Activated CD4-positive, alpha-beta memory T cell treated with anti-CD3 and anti-CD28 coated beads, Interleukin-2, amount 10 ng/mL, durations not matched to agents 7 days and 5 days (primary cell): ENCODE measurements at regions of chr12 and their contacts with region 1.

Region 1: DNA sequence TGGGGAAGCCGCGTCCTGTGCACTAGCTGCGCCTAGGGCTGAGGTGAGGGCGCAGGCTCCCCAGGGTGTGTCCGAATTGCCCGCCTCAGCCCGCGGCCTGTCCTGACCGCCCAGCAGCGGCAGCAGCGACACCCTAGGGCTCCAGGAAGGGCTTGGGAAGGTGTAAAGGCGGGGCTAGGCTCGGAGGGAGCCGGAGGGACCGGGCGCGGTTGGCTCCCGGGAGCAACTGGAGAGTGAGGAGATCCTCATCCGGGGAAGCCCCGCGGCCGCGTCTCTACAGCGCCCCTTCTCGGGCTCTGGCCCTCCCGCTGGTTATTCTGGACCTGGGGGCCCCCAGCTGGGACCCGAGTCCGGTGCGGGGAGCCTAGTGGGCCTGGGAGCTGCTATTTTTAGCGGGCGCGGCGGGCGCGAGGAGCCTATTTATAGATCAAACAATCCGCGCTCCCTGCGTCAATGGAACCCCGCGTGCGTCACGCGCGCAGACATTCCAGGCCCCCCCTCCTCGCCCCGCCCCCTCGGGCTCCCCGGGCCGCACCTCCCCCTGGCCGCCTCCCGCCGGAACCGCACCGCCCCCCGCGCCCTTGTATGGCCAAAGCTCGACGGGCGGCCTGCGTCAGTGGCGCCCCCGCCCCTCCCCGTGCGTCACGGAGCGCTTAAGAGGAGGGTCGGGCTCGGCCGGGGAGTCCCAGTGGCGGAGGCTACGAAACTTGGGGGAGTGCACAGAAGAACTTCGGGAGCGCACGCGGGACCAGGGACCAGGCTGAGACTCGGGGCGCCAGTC is at the start of gene NR4A1:
- DNase-seq: peak; percentile 98
- H3K4me3 Mint-ChIP-seq: peak within 1 kb of the TSS; percentile 85
- H3K27ac Mint-ChIP-seq: peak within 1 kb of the TSS; percentile 82
- H3K4me1 Mint-ChIP-seq: peaks cover 46% of the 10 kb centered on the region
- H3K27me3 Mint-ChIP-seq: peaks cover 6% of the 10 kb centered on the region
- total RNA-seq, gene NR4A1: 10.0 to 10.5 TPM

Region 2: GRCh38 chr12:52063981-52064649 is 13.2 kb after region 1 on chr12:
- CTCF ChIA-PET with region 1: interaction called, 16 read pairs
- POLR2A ChIA-PET with region 1: interaction called, 28 read pairs
- DNase-seq: no peak
- H3K4me3 Mint-ChIP-seq: no peak overlapping the region
- H3K27ac Mint-ChIP-seq: no peak overlapping the region
- H3K4me1 Mint-ChIP-seq: peaks cover 18% of the 10 kb centered on the region
- H3K27me3 Mint-ChIP-seq: peaks cover 7% of the 10 kb centered on the region

Region 3: GRCh38 chr12:52319097-52319496 is 268.1 kb after region 1 on chr12:
- CTCF ChIA-PET with region 1: no interaction called
- POLR2A ChIA-PET with region 1: no interaction called
- DNase-seq: no peak
- H3K4me3 Mint-ChIP-seq: no peak overlapping the region
- H3K27ac Mint-ChIP-seq: no peak overlapping the region
- H3K4me1 Mint-ChIP-seq: peaks cover 2% of the 10 kb centered on the region
- H3K27me3 Mint-ChIP-seq: peaks cover 43% of the 10 kb centered on the region